ENCODE measurements at regions of chr10 and their contacts with region 1.

Region 1: DNA sequence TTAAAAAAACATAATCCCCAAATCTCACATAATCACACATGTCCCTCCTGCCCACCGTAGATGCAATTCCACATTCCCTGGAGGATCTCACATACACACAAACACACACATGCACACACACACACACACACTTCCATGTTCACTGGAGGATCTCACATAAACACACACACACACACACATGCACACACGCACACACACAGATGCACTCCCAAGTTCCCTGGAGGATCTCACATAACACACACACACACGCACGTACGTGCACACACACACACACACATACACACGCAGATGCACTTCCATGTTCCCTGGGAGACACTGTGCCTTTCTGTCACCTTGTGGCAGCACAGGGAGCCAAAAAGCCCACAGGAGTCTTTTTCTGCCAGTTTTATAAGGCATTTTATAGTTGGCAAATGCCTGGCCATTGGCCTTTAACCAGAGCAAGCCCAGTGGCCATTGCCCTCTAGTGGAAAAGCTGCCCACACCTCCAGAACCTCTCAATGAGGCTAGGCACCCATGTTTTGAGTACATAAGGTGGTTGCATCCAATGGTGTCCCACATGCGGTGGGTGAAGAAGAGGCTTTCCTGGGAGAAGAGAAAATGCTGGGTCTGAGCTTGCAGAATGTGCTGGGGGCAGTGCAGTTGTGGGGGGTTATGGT is 115.4 kb upstream of the ACBD5 start:
- DNase-seq: no peak
- H3K4me3 ChIP-seq: no peak overlapping the region
- H3K27ac ChIP-seq: no peak overlapping the region
- H3K4me1 ChIP-seq: peaks cover 0 to 6% (median 0%) of the 10 kb centered on the region in 4 donors
- H3K27me3 ChIP-seq: no peaks in the 10 kb centered on the region
- CTCF ChIP-seq: no peak

Region 2: DNA sequence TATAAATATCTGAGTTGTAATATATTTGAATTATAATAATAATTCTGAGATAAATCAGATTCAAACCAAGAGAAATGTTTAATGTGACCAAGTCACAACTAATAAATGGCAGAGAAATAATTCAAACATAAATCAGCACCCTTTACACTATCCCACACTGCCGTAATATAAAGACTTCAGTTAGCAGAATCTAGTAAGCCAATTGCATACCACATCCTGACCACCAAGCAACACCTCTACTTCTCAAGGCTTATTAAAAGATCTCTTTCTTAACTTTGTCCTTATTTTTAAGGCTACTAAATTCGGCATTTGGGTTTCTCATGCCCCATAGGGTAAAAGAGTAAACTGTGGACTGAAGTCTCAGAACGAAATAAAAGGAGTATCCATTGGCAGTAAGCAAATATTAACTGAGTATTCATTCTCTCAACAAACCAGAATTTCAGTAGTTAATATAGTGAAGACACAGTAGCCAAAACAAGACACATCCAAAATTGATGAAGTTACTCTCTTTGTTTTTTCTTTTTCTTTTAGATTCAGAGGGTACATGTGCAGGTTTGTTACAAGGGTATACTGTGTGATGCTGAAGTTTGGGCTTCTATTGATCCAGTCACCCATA is 130.3 kb before region 1 on chr10:
- intact Hi-C with region 1: loop called (anchors 5 kb)
- DNase-seq: no peak
- H3K4me3 ChIP-seq: no peak overlapping the region
- H3K27ac ChIP-seq: no peak overlapping the region
- H3K4me1 ChIP-seq: no peaks in the 10 kb centered on the region
- H3K27me3 ChIP-seq: no peaks in the 10 kb centered on the region
- CTCF ChIP-seq: no peak

Measured in tibial artery (tissue), 4 donors.